ENCODE measurements at regions of chr5 and their contacts with region 1.

Region 1: DNA sequence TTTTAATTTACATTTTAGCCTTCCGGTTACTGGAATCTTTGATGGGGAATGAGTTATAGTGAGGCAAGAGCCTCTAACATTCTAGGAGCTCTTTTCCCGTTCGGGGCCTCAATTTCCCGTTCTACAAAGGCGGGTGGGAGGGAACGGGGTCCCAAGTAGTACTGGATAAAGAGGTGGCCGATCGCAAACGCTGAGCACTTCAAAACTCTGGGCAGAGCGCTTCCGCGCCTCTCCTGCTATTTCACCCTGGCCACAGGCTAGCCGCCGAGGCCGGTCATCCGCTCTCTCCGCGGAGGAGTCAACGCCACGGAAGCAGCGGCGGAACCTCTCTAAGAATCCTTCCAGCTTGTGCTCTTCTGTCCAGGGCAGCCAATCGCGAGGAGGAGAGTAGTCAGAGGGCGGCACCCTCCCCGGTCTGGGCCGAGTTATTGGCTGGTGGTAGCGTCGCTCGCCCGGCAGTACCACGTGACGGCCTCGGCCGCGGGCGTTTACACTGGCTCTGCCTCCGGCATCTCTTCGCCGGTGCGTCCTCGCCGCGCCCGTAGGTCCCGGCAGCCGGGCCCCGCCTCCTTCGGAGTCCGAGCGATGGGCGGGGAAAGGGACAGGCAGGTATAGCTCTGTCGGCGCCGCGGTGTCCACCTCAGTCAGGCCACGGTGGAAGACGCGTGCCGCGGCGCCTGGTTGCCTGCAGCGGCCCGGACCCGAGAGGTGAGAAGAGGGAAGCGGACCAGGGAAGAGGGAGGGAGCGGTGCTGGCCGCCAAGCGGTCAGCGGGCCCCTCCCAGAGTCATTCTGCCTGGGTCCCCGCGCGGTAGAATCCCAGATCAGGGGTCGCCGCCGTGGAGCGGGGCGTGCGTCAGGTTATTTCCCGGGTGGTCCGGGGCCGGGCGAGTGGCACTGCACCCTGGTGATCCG is at the start of gene SLC26A2:
- DNase-seq: peak; percentile 90 to 96 (median 91)
- H3K4me3 ChIP-seq: peak within 1 kb of the TSS; percentile 80 to 84
- H3K4me3 Mint-ChIP-seq: peak within 1 kb of the TSS; percentile 93 to 99 (median 98)
- H3K27ac ChIP-seq: peak within 1 kb of the TSS; percentile 72
- H3K27ac Mint-ChIP-seq: peak within 1 kb of the TSS; percentile 91 to 100 (median 98)
- H3K4me1 ChIP-seq: peaks cover 27% of the 10 kb centered on the region
- H3K4me1 Mint-ChIP-seq: peaks cover 27 to 37% (median 30%) of the 10 kb centered on the region in 4 donors
- H3K27me3 ChIP-seq: no peaks in the 10 kb centered on the region
- H3K27me3 Mint-ChIP-seq: no peaks in the 10 kb centered on the region
- total RNA-seq, gene SLC26A2: 14.2 to 14.3 TPM

Region 2: DNA sequence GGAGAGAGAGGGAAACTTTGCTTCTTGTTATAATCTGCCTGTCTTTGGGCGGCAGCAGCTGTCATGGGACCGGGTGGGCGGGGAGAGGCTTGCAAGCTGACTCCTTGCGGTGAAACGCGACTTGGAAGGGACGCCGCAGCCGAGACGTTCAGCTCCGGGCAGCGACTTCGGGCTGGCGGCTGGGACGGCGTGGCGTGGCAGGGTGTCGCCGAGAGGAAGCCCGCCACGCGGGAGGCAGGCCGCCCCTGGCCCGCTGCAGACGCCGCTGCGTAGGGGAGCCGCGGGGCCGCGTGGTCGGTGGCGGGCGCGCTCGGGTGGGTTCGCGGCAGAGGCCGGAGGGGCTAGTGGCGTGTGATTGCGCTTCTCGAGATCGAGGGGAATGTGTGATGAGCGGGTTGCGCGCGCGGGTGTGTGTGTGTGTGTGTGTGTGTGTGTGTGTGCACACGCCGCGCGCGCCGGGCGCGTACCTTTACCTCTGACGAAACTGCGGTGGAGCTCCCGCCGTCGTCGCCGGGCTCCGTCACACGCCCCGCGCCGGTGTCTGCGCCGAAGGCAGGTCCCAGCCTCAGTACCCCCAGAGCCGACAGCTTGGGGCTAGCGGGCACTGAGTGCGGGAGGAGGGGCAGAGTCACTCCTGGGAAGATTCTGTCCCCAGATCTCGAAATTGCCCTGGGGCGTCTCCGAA is 228.7 kb before region 1 on chr5:
- CTCF ChIA-PET with region 1: no interaction called
- POLR2A ChIA-PET with region 1: interaction called, 5 read pairs
- intact Hi-C with region 1: loop called (anchors 1 kb)
- DNase-seq: peak; percentile 47 to 85 (median 61)
- H3K4me3 ChIP-seq: peak overlapping the region; percentile 39 to 76
- H3K4me3 Mint-ChIP-seq: peak overlapping the region; percentile 85 to 92 (median 88)
- H3K27ac ChIP-seq: no peak overlapping the region
- H3K27ac Mint-ChIP-seq: peak overlapping the region; percentile 19 to 82 (median 76)
- H3K4me1 ChIP-seq: no peaks in the 10 kb centered on the region
- H3K4me1 Mint-ChIP-seq: peaks cover 0 to 14% (median 1%) of the 10 kb centered on the region in 4 donors
- H3K27me3 ChIP-seq: no peaks in the 10 kb centered on the region
- H3K27me3 Mint-ChIP-seq: no peaks in the 10 kb centered on the region

Region 3: GRCh38 chr5:149834246-149834855 is 126.2 kb before region 1 on chr5:
- CTCF ChIA-PET with region 1: interaction called, 18 read pairs
- POLR2A ChIA-PET with region 1: no interaction called
- intact Hi-C with region 1: no loop called
- DNase-seq: peak; percentile 43 to 57 (median 49)
- H3K4me3 ChIP-seq: no peak overlapping the region
- H3K4me3 Mint-ChIP-seq: peak overlapping the region in 1 of 8 donors; percentile 28
- H3K27ac ChIP-seq: no peak overlapping the region
- H3K27ac Mint-ChIP-seq: no peak overlapping the region
- H3K4me1 ChIP-seq: no peaks in the 10 kb centered on the region
- H3K4me1 Mint-ChIP-seq: no peaks in the 10 kb centered on the region
- H3K27me3 ChIP-seq: no peaks in the 10 kb centered on the region
- H3K27me3 Mint-ChIP-seq: no peaks in the 10 kb centered on the region

Region 4: GRCh38 chr5:149852641-149853330 is 107.7 kb before region 1 on chr5:
- CTCF ChIA-PET with region 1: interaction called, 13 read pairs
- POLR2A ChIA-PET with region 1: no interaction called
- intact Hi-C with region 1: no loop called
- DNase-seq: peak in 3 of 5 donors; percentile 10 to 19 (median 12)
- H3K4me3 ChIP-seq: no peak overlapping the region
- H3K4me3 Mint-ChIP-seq: no peak overlapping the region
- H3K27ac ChIP-seq: no peak overlapping the region
- H3K27ac Mint-ChIP-seq: no peak overlapping the region
- H3K4me1 ChIP-seq: no peaks in the 10 kb centered on the region
- H3K4me1 Mint-ChIP-seq: no peaks in the 10 kb centered on the region
- H3K27me3 ChIP-seq: no peaks in the 10 kb centered on the region
- H3K27me3 Mint-ChIP-seq: no peaks in the 10 kb centered on the region

Region 5: DNA sequence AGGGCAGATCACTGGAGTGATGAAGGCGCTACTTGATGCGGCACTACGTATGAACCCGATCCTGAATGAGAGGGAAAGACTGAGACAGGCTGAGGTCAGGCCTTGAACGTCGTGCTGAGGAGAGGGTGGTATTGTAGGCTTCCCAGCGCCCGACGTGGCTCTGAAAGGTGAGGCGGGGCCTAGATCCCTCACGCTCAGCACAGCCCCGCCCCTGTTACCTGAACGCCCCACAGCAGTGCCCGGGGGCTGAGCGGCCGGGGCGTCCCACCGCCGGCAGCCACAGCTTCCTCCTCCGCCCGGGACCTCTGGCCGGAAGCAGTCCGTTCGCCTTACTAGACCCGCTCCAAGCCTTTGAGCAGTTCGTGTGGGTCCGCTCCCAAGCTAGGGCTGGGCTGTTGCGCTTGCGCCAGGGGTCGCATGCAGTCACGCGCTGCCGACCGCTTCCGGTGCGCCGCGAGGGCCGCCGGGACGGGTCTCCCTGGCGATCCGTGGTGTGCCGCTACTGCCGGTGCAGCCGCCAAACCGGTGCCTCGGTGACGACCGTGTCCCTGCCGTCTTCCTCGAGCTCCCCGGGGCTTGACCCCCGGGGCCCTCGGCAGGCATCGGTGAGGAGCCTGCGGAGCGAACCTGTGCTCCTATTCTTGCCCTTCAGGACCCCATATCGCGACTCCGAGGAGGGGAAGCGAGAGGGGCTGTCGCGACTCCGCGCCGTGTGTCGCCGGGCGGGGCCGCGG is 39.9 kb after region 1 on chr5 and contains the starts of genes HMGXB3 and TIGD6:
- CTCF ChIA-PET with region 1: interaction called, 7 read pairs
- POLR2A ChIA-PET with region 1: interaction called, 35 read pairs
- intact Hi-C with region 1: loop called (anchors 1 kb)
- DNase-seq: peak; percentile 75 to 84 (median 79)
- H3K4me3 ChIP-seq: peak within 1 kb of the TSS; percentile 85 to 86
- H3K4me3 Mint-ChIP-seq: peak within 1 kb of the TSS; percentile 94 to 99 (median 97)
- H3K27ac ChIP-seq: peak within 1 kb of the TSS; percentile 80
- H3K27ac Mint-ChIP-seq: peak within 1 kb of the TSS; percentile 81 to 99 (median 97)
- H3K4me1 ChIP-seq: peaks cover 28% of the 10 kb centered on the region
- H3K4me1 Mint-ChIP-seq: peaks cover 34 to 50% (median 44%) of the 10 kb centered on the region in 4 donors
- H3K27me3 ChIP-seq: no peaks in the 10 kb centered on the region
- H3K27me3 Mint-ChIP-seq: no peaks in the 10 kb centered on the region
- total RNA-seq, gene HMGXB3: 35.3 to 35.4 TPM
- total RNA-seq, gene TIGD6: 5.8 to 6.8 TPM

Region 6: GRCh38 chr5:150022163-150022540 is 61.6 kb after region 1 on chr5:
- CTCF ChIA-PET with region 1: no interaction called
- POLR2A ChIA-PET with region 1: no interaction called
- intact Hi-C with region 1: no loop called
- DNase-seq: no peak
- H3K4me3 ChIP-seq: no peak overlapping the region
- H3K4me3 Mint-ChIP-seq: no peak overlapping the region
- H3K27ac ChIP-seq: no peak overlapping the region
- H3K27ac Mint-ChIP-seq: peak overlapping the region in 1 of 7 donors; percentile 82
- H3K4me1 ChIP-seq: no peaks in the 10 kb centered on the region
- H3K4me1 Mint-ChIP-seq: peaks cover 0 to 4% (median 0%) of the 10 kb centered on the region in 4 donors
- H3K27me3 ChIP-seq: no peaks in the 10 kb centered on the region
- H3K27me3 Mint-ChIP-seq: no peaks in the 10 kb centered on the region

Measured in CD4-positive, alpha-beta memory T cell (primary cell).